ENCODE measurements at regions of chr1 and their contacts with region 1.

Region 1: GRCh38 chr1:203861379-203862184 is at the start of gene SNRPE:
- DNase-seq: peak; percentile 93 to 98 (median 97)
- ATAC-seq: peak; percentile 100
- H3K4me3 ChIP-seq: peak within 1 kb of the TSS; percentile 82
- H3K4me3 Mint-ChIP-seq: peak within 1 kb of the TSS; percentile 97 to 100 (median 99)
- H3K27ac ChIP-seq: peak within 1 kb of the TSS; percentile 89
- H3K27ac Mint-ChIP-seq: peak within 1 kb of the TSS; percentile 95 to 100 (median 98)
- H3K4me1 ChIP-seq: peaks cover 10 to 13% of the 10 kb centered on the region in 2 donors
- H3K4me1 Mint-ChIP-seq: peaks cover 11 to 34% (median 23%) of the 10 kb centered on the region in 7 donors
- H3K27me3 ChIP-seq: no peaks in the 10 kb centered on the region
- H3K27me3 Mint-ChIP-seq: no peaks in the 10 kb centered on the region
- total RNA-seq, gene SNRPE: 54.4 to 156 (median 81.7) TPM

Region 2: DNA sequence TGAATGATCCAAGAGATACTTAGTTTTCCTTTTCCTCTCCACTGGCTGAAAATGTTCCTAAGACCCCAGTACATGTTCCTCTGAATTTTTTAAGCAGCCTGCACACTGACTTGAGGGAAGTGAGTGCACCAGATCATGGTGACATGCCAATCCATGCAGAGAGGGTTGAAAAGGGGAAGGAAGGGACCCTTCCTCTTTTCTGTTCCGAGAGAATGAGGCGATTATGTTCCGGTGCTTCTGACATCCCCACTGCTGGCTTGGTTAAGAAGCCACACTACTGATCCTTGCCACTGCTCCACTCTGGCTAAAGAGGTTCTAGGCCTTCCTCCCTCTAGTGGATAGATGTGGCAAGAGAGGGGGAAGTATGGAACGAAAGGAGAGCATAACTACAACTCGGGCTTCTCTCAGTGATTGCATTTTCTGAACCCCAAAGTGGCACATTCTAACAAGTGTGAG is 892.7 kb before region 1 on chr1:
- CTCF ChIA-PET with region 1: no interaction called
- POLR2A ChIA-PET with region 1: no interaction called
- intact Hi-C with region 1: loop called in 1 of 2 experiments (anchors 1 kb)
- DNase-seq: peak in 7 of 9 donors; percentile 24 to 64 (median 47)
- ATAC-seq: peak; percentile 73
- H3K4me3 ChIP-seq: no peak overlapping the region
- H3K4me3 Mint-ChIP-seq: peak overlapping the region in 9 of 10 donors; percentile 40 to 98 (median 94)
- H3K27ac ChIP-seq: peak overlapping the region; percentile 83
- H3K27ac Mint-ChIP-seq: peak overlapping the region in 8 of 9 donors; percentile 80 to 96 (median 94)
- H3K4me1 ChIP-seq: peaks cover 14 to 20% of the 10 kb centered on the region in 2 donors
- H3K4me1 Mint-ChIP-seq: peaks cover 15 to 34% (median 27%) of the 10 kb centered on the region in 7 donors
- H3K27me3 ChIP-seq: no peaks in the 10 kb centered on the region
- H3K27me3 Mint-ChIP-seq: peaks cover 0 to 15% (median 0%) of the 10 kb centered on the region in 5 donors

Region 3: DNA sequence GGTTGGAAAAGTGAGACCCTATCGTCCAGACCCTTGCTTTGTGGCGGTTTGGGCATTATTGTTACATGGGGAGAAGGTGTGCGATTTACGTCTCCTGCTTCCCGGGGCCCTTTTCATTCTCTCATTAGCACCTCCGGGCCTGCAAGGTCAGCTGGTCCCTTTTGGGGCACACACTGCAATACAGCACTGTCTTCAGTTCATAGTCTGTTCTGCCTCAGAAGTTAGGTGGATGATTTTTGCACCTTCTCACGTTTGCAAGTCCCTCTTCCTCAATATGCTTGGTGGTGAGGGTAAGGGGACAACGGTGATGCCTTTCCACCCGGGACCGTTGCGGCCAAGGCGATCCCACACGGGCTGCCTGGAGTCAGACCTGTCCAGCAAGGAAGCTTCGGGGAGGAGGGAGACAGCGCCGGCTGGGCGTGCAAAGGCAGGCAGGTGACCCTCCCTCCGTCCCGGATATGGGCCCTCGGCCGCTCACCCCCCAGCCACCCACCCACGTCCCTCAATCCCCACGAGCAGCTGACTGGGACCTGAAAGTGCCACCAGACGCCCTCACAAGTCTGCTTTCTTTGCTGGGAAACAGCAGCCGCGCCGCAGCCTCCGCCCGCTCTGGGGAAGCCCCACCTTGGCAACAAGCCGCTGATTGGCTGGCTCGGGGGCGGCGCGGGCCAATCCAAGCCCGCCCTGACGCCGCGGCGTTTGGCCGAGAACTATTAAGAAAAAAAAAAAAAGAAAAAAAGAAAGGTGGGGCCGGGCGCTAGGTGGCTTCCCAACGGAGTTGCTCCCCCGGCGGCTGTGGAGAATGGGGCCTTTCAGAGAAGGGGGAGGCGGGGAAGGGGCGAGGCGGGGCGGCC is 534.5 kb before region 1 on chr1:
- CTCF ChIA-PET with region 1: no interaction called
- POLR2A ChIA-PET with region 1: no interaction called
- intact Hi-C with region 1: loop called in 1 of 2 experiments (anchors 10 kb)
- DNase-seq: peak; percentile 90 to 96 (median 94)
- ATAC-seq: peak; percentile 84
- H3K4me3 ChIP-seq: peak overlapping the region; percentile 72
- H3K4me3 Mint-ChIP-seq: peak overlapping the region; percentile 80 to 89 (median 86)
- H3K27ac ChIP-seq: peak overlapping the region; percentile 98
- H3K27ac Mint-ChIP-seq: peak overlapping the region; percentile 90 to 100 (median 99)
- H3K4me1 ChIP-seq: peaks cover 55 to 56% of the 10 kb centered on the region in 2 donors
- H3K4me1 Mint-ChIP-seq: peaks cover 40 to 73% (median 70%) of the 10 kb centered on the region in 7 donors
- H3K27me3 ChIP-seq: no peaks in the 10 kb centered on the region
- H3K27me3 Mint-ChIP-seq: no peaks in the 10 kb centered on the region

Region 4: DNA sequence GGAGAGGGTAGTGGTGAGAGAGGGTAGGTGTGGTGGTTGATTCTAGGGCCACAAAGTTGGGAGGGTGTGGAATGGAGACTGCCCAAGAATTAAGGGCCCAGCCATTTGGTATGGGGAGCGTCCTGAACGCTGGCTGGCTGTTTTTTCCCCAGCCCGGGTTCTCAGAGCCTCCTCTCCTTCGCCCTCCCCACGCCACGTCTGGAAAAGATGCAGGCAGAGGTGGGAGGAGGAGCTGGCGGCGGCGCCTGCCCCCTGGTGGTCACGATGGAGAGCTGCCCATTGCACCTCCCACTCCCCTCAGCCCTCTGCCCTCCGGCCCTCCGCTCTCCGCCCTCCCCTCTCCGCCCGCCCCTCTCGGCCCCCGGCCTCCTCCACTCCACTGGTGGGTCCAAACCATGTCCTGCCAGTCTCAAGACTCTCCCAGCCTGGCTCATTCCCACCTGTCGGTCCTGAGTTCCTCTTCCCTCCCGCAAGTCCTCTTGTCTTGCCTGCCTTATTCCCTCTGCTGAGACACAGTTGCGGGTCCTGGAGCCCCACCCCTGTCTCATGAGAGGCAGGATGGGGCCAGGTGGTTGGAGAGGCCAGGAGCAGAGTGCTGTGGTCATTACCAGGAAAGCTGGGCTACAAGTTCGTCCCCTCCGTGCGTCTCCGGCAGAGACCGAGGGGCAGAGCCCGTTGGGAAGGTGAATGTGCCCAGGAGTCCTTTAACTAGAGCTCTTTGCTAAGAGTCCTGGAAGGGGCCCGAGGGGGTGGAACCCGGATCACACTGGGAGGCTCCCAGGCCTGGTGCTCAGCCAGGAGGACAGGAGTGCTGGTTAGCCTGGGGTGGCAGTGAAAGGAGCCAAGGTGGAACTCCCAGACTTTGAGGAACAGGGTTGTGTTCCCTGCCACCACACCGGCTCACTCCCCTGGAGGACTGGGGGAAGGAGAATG is 267.6 kb after region 1 on chr1:
- CTCF ChIA-PET with region 1: interaction called, 16 read pairs
- POLR2A ChIA-PET with region 1: no interaction called
- intact Hi-C with region 1: loop called (anchors 1 kb)
- DNase-seq: peak; percentile 19 to 70 (median 48)
- ATAC-seq: peak; percentile 84
- H3K4me3 ChIP-seq: no peak overlapping the region
- H3K4me3 Mint-ChIP-seq: peak overlapping the region in 5 of 10 donors; percentile 13 to 47 (median 24)
- H3K27ac ChIP-seq: no peak overlapping the region
- H3K27ac Mint-ChIP-seq: peak overlapping the region in 1 of 9 donors; percentile 48
- H3K4me1 ChIP-seq: no peaks in the 10 kb centered on the region
- H3K4me1 Mint-ChIP-seq: peaks cover 0 to 12% (median 9%) of the 10 kb centered on the region in 7 donors
- H3K27me3 ChIP-seq: no peaks in the 10 kb centered on the region
- H3K27me3 Mint-ChIP-seq: no peaks in the 10 kb centered on the region

Region 5: GRCh38 chr1:204363335-204364124 is 501.9 kb after region 1 on chr1:
- CTCF ChIA-PET with region 1: no interaction called
- POLR2A ChIA-PET with region 1: no interaction called
- intact Hi-C with region 1: loop called (anchors 1 kb)
- DNase-seq: peak; percentile 47 to 81 (median 74)
- ATAC-seq: peak; percentile 94
- H3K4me3 ChIP-seq: peak overlapping the region; percentile 69
- H3K4me3 Mint-ChIP-seq: peak overlapping the region; percentile 37 to 84 (median 70)
- H3K27ac ChIP-seq: peak overlapping the region; percentile 58
- H3K27ac Mint-ChIP-seq: peak overlapping the region; percentile 37 to 84 (median 69)
- H3K4me1 ChIP-seq: peaks cover 11 to 12% of the 10 kb centered on the region in 2 donors
- H3K4me1 Mint-ChIP-seq: peaks cover 7 to 18% (median 13%) of the 10 kb centered on the region in 7 donors
- H3K27me3 ChIP-seq: no peaks in the 10 kb centered on the region
- H3K27me3 Mint-ChIP-seq: peaks cover 0 to 8% (median 0%) of the 10 kb centered on the region in 5 donors

Region 6: GRCh38 chr1:204411451-204412204 is 550.0 kb after region 1 on chr1 and contains the start of gene PPP1R15B:
- CTCF ChIA-PET with region 1: no interaction called
- POLR2A ChIA-PET with region 1: no interaction called
- intact Hi-C with region 1: loop called (anchors 1 to 5 kb)
- DNase-seq: peak; percentile 92 to 99 (median 98)
- ATAC-seq: peak; percentile 91
- H3K4me3 ChIP-seq: peak within 1 kb of the TSS; percentile 99
- H3K4me3 Mint-ChIP-seq: peak within 1 kb of the TSS; percentile 92 to 99 (median 97)
- H3K27ac ChIP-seq: peak within 1 kb of the TSS; percentile 100
- H3K27ac Mint-ChIP-seq: peak within 1 kb of the TSS; percentile 97 to 100 (median 99)
- H3K4me1 ChIP-seq: peaks cover 0 to 5% of the 10 kb centered on the region in 2 donors
- H3K4me1 Mint-ChIP-seq: peaks cover 8 to 23% (median 14%) of the 10 kb centered on the region in 7 donors
- H3K27me3 ChIP-seq: no peaks in the 10 kb centered on the region
- H3K27me3 Mint-ChIP-seq: no peaks in the 10 kb centered on the region
- total RNA-seq, gene PPP1R15B: 69.5 to 175 (median 73.0) TPM

Region 7: GRCh38 chr1:205211169-205211838 is 1349.7 kb after region 1 on chr1 and contains the start of gene DSTYK:
- CTCF ChIA-PET with region 1: no interaction called
- POLR2A ChIA-PET with region 1: no interaction called
- intact Hi-C with region 1: loop called in 1 of 2 experiments (anchors 5 kb)
- DNase-seq: peak; percentile 77 to 95 (median 93)
- ATAC-seq: peak; percentile 95
- H3K4me3 ChIP-seq: peak within 1 kb of the TSS; percentile 75
- H3K4me3 Mint-ChIP-seq: peak within 1 kb of the TSS; percentile 89 to 98 (median 96)
- H3K27ac ChIP-seq: peak within 1 kb of the TSS; percentile 87
- H3K27ac Mint-ChIP-seq: peak within 1 kb of the TSS; percentile 95 to 99 (median 98)
- H3K4me1 ChIP-seq: peaks cover 8% of the 10 kb centered on the region in 2 donors
- H3K4me1 Mint-ChIP-seq: peaks cover 12 to 66% (median 54%) of the 10 kb centered on the region in 7 donors
- H3K27me3 ChIP-seq: no peaks in the 10 kb centered on the region
- H3K27me3 Mint-ChIP-seq: peaks cover 0 to 4% (median 0%) of the 10 kb centered on the region in 5 donors
- total RNA-seq, gene DSTYK: 11.3 to 18.5 (median 15.2) TPM